AG04450 (cell line): ENCODE measurements at regions of chr5 and their contacts with region 1.

Region 1: DNA sequence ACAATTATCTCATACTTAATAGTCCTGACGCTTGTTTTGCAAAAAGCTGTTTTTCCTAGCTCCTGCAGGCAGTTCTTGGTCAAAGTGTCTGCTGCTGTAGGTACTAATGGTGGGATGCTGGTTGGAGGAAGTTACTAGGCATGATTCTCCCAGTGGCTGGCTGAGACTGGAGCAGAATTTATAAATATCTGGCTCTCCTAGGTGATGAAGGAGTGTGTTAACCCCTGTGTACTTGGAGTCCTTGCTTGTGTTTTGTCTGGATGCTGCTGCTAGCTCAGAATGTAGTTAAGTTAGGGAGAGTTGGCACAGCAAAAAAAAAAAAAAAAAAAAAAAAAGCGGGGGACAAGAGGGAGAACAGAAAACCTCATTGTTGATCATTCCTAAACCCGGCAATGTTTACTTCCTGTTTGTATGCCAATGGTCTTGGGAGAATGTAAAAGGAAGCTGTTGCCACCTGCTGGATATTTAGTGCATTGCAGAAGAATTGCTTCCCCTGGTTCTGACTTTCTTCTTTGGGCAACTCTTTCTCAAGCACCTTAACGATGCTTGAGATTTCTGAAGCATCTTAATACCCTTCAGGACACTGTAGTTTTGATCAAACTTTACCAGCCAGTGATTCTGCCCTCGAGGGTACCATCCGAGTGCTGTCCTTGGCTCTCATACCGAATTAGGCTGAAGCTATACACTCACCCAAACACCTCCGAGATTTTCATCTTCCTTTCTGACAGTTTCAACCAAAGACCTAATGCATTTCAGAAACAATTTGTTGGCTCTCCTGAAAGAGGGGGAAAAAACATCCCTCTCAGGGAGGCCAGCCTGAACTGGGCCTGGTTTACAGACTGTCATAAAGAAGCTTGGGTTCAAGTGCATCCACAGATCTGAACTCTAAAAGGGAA is 71.7 kb upstream of the WWC1 start:
- DNase-seq: peak; percentile 42
- H3K4me3 ChIP-seq: peak overlapping the region; percentile 34; the same call in 1 of the 2 replicates
- H3K27ac ChIP-seq: no peak overlapping the region
- H3K27me3 ChIP-seq: peaks cover 4% of the 10 kb centered on the region
- CTCF ChIP-seq: peak; percentile 94

Region 2: DNA sequence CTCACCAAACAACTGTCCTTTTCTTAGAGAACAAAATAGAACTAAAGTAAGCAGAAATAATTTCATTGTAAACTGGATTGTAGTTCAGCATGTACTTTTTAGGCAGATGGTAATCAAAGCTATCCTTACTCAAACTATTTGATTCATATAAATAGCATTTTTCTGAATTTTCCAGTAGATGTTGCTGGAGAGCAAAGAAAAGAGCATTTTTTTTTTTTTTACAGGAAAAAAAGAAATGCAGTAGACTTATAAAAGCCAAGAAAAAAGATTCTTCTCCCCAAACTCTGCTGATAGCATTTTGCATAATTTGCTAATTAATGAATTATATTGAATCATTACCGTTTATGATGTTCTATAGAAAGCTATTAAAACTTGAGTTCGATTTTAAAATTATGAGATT is 643.6 kb before region 1 on chr5:
- CTCF ChIA-PET with region 1: interaction called, 10 read pairs
- POLR2A ChIA-PET with region 1: interaction called, 3 read pairs
- DNase-seq: no peak
- H3K4me3 ChIP-seq: no peak overlapping the region
- H3K27ac ChIP-seq: no peak overlapping the region
- H3K27me3 ChIP-seq: peaks cover 13% of the 10 kb centered on the region
- CTCF ChIP-seq: no peak

Region 3: GRCh38 chr5:167623354-167623753 is 596.4 kb before region 1 on chr5:
- CTCF ChIA-PET with region 1: interaction called, 10 read pairs
- POLR2A ChIA-PET with region 1: no interaction called
- DNase-seq: no peak
- H3K4me3 ChIP-seq: no peak overlapping the region
- H3K27ac ChIP-seq: no peak overlapping the region
- H3K27me3 ChIP-seq: no peaks in the 10 kb centered on the region
- CTCF ChIP-seq: no peak

Region 4: GRCh38 chr5:167730121-167730520 is 489.6 kb before region 1 on chr5:
- CTCF ChIA-PET with region 1: interaction called, 15 read pairs
- POLR2A ChIA-PET with region 1: no interaction called
- DNase-seq: peak; percentile 80
- H3K4me3 ChIP-seq: no peak overlapping the region
- H3K27ac ChIP-seq: no peak overlapping the region
- H3K27me3 ChIP-seq: no peaks in the 10 kb centered on the region
- CTCF ChIP-seq: no peak

Region 5: DNA sequence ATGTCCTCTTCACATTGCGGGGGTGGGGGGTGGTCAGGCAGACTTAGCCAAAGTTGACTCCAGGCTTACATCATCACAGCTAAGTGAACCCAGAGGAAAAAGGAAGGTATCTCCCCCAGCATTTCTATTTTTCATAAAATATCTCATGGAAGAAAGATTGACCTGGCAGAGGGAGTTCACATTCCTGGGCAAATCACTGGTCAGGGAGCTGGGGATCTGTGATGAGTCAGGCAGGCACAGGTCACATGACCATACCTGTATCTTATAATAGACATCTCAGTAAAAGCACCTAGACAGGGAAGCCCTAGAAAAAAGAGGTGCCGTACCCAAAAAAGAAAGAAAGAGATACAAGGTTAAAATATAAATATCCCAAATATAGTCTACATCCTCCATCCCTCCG is 14.4 kb after region 1 on chr5:
- CTCF ChIA-PET with region 1: interaction called, 13 read pairs
- POLR2A ChIA-PET with region 1: no interaction called
- DNase-seq: no peak
- H3K4me3 ChIP-seq: no peak overlapping the region
- H3K27ac ChIP-seq: no peak overlapping the region
- H3K27me3 ChIP-seq: no peaks in the 10 kb centered on the region
- CTCF ChIP-seq: no peak

Region 6: DNA sequence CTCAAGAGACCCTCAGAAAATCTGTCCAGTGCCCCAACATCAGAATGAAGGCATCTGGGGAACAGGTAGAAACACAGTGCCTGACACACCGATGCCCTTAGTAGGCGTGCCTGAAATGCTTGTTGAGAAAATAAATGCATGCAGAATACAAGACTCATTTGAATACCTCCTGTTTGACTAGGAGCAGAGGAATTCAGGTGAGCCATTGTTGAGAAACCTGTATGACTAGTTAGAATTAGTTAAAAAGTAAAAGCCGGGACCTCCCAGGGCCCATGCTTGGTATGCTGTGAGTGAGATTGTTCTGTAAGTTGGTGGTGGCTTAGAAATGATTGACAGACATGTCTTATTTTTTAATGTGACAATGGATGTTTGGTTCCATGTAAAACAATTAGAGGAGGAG is 126.7 kb after region 1 on chr5:
- CTCF ChIA-PET with region 1: no interaction called
- POLR2A ChIA-PET with region 1: no interaction called
- DNase-seq: no peak
- H3K4me3 ChIP-seq: no peak overlapping the region
- H3K27ac ChIP-seq: no peak overlapping the region
- H3K27me3 ChIP-seq: no peaks in the 10 kb centered on the region
- CTCF ChIP-seq: no peak

Region 7: GRCh38 chr5:170017772-170018171 is 1798.0 kb after region 1 on chr5:
- CTCF ChIA-PET with region 1: interaction called, 11 read pairs
- POLR2A ChIA-PET with region 1: no interaction called
- DNase-seq: no peak
- H3K4me3 ChIP-seq: no peak overlapping the region
- H3K27ac ChIP-seq: no peak overlapping the region
- H3K27me3 ChIP-seq: peaks cover 19% of the 10 kb centered on the region
- CTCF ChIP-seq: no peak